Right cardiac atrium (tissue), 5 donors: ENCODE measurements at regions of chr9 and their contacts with region 1.

Region 1: DNA sequence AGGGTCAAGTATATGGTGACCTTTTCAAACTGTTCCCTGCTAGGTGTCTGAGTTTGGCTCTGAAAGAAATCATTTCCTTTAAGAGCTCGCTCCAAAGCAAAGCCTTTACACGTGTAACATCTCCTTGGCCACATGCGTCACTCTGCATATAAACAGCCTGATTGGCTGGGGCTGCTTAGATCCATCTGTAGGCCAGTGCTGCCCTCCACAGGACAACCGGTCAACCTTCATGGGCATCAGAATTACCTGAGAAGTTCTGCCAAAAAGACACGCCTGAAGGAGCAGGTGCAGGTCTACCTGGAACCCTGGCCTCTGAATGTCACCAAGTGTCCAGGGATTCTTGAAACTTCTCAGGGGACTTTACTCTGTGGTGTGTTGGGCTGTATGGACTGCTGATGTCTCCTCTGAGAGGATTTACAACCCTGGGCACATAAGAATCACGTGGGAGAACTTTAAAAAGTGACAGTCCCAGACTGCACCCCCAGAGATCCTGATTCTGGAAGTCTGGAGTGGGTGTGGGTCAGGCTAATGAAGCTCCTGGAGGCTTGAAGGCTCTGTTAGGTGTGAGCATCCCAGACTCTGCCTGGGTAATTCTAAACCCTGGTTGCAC is 497.6 kb downstream of the GADD45G start:
- DNase-seq: peak; percentile 83 to 90 (median 85)
- ATAC-seq: peak; percentile 90 to 95
- H3K4me3 ChIP-seq: no peak overlapping the region
- H3K27ac ChIP-seq: no peak overlapping the region
- H3K4me1 ChIP-seq: no peaks in the 10 kb centered on the region
- H3K27me3 ChIP-seq: no peaks in the 10 kb centered on the region

Region 2: DNA sequence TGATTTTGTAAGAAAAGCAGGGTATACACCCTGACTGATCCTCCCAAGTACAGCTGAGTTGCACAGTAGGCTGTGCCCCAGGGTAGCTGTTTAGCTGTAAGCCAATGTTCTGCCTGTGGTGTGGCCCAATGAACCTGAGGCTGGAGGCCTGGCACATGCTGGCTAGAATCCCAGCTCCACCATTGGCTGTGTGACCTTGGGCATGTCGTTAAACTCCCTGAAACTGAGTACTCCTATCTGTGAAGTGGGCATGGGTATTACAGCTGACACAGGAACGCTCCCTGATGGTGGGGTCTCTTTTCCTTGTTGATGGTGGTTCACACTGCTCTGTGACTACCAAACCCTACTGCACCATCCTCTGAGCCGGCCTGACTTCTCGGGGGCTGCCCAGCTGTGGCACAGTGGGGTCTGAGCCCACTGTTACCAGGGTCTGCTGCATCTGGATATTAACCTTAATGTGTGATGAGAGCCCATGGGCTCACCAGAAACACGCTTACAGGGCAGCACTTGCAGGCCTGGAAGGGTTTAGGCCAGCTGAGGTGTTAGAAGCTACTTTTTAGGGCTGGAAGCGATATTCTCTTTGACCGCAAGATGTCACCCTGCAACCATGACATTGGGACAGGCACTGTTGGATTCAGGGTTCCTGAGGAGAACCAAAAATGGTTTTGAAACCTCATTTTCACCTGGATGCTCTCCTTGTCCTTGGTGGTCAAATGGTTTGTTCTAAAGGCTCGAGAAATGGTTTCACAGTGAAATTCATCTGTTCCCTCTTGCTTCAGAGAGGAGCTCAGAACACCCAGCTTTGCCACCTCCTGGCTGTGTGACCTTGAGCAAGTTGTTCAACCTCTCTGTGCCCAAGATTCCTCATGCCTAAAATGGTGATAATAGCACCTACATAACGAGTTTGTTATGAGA is 504.4 kb before region 1 on chr9:
- intact Hi-C with region 1: loop called (anchors 2 to 5 kb)
- DNase-seq: peak in 1 of 3 donors; percentile 29
- ATAC-seq: peak; percentile 40 to 66
- H3K4me3 ChIP-seq: no peak overlapping the region
- H3K27ac ChIP-seq: no peak overlapping the region
- H3K4me1 ChIP-seq: no peaks in the 10 kb centered on the region
- H3K27me3 ChIP-seq: no peaks in the 10 kb centered on the region

Region 3: GRCh38 chr9:89602978-89603766 is 499.2 kb before region 1 on chr9:
- intact Hi-C with region 1: loop called (anchors 2 to 5 kb)
- DNase-seq: peak; percentile 89 to 96 (median 96)
- ATAC-seq: peak; percentile 27 to 30
- H3K4me3 ChIP-seq: peak overlapping the region; percentile 44
- H3K27ac ChIP-seq: peak overlapping the region; percentile 43
- H3K4me1 ChIP-seq: peaks cover 3% of the 10 kb centered on the region
- H3K27me3 ChIP-seq: no peaks in the 10 kb centered on the region

Region 4: DNA sequence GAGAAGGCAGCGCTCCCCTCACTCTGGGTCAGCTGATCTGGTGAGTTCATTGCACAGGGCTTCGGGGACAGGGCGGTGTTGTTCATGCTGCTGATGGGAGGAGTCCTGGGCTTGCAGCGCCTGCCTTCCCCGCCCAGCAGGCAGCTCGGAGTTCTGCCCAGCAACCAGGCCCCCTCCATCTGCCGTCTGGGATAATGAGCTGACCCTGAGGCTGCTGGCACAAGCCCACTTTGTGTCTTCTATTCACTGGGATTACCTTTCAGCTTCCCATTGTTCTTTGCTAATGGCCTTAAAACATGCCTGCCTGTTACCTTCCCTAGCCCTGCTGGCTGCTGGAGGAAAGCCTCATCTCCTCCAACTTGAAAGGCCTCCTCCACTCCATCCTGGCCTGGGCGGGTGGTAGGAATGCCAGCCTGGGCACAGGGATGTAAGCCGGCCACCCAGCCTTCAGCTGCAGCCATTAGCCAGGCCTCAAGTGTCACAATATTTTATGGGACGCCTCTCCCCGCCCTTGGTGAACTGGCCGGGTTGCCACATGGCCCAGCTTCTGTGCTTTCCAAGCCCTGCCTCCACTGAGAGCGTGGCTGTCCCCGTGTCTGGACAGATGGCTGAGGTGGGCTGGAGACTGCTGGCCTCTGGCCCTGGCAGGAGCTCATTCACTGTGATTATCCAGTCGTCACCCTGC is 427.2 kb before region 1 on chr9:
- intact Hi-C with region 1: loop called in 1 of 4 experiments (anchors 5 kb)
- DNase-seq: peak; percentile 64 to 87 (median 81)
- ATAC-seq: peak; percentile 78 to 86
- H3K4me3 ChIP-seq: no peak overlapping the region
- H3K27ac ChIP-seq: no peak overlapping the region
- H3K4me1 ChIP-seq: peaks cover 2% of the 10 kb centered on the region
- H3K27me3 ChIP-seq: no peaks in the 10 kb centered on the region

Region 5: GRCh38 chr9:89929673-89930480 is 172.5 kb before region 1 on chr9:
- intact Hi-C with region 1: loop called in 2 of 4 experiments (anchors 10 kb)
- DNase-seq: peak in 1 of 3 donors; percentile 36
- ATAC-seq: peak; percentile 65 to 85
- H3K4me3 ChIP-seq: no peak overlapping the region
- H3K27ac ChIP-seq: no peak overlapping the region
- H3K4me1 ChIP-seq: peaks cover 13% of the 10 kb centered on the region
- H3K27me3 ChIP-seq: no peaks in the 10 kb centered on the region

Region 6: DNA sequence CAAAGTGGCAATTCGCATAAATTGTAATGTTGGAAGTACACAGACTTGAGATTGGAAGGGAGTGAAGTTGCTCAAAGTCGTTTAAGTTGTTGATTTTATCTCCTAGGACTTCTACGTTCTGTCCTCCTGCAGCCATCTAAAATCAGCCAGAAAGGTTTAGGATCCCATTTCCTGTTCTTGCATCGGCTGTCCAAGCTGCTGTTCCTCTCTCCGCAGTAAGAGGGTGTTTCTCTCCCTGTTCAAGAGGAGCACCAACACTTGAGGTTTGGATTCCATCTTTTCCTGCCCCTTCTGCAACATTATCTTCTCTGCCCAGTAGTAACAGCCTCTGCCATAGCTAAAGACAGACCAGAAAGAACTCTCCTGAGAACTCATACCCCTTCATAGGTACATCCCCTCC is 124.2 kb before region 1 on chr9:
- intact Hi-C with region 1: loop called in 1 of 4 experiments (anchors 10 kb)
- DNase-seq: no peak
- ATAC-seq: peak in 1 of 2 donors; percentile 17
- H3K4me3 ChIP-seq: no peak overlapping the region
- H3K27ac ChIP-seq: no peak overlapping the region
- H3K4me1 ChIP-seq: no peaks in the 10 kb centered on the region
- H3K27me3 ChIP-seq: no peaks in the 10 kb centered on the region

Region 7: GRCh38 chr9:89999534-90000370 is 102.6 kb before region 1 on chr9:
- intact Hi-C with region 1: loop called in 2 of 4 experiments (anchors 10 kb)
- DNase-seq: peak; percentile 55 to 88 (median 85)
- ATAC-seq: peak; percentile 86 to 88
- H3K4me3 ChIP-seq: no peak overlapping the region
- H3K27ac ChIP-seq: peak overlapping the region; percentile 84
- H3K4me1 ChIP-seq: peaks cover 19% of the 10 kb centered on the region
- H3K27me3 ChIP-seq: no peaks in the 10 kb centered on the region

Region 8: DNA sequence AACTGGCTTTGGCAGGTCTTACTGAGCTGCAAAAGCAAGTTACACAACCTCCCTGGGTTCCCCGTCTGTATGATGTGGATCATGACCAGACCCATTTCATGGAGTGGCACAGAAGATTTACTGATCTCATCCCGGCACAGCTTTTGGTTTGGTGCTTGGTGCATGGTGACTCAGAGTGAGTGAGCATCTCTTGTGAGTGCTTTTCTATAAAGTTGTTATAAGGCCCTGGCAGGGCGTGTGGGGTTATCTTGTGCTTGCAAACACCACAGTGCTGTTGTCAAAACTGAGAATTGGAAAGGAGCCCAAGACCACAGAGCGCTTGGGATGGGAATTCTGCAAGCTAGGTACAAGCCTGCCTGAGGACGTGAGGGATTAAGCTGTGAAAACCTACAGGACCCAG is 72.4 kb before region 1 on chr9:
- intact Hi-C with region 1: no loop called
- DNase-seq: no peak
- ATAC-seq: no peak
- H3K4me3 ChIP-seq: no peak overlapping the region
- H3K27ac ChIP-seq: no peak overlapping the region
- H3K4me1 ChIP-seq: no peaks in the 10 kb centered on the region
- H3K27me3 ChIP-seq: no peaks in the 10 kb centered on the region